Endothelial cell of umbilical vein (primary cell): ENCODE measurements at regions of chr1 and their contacts with region 1.

Region 1: DNA sequence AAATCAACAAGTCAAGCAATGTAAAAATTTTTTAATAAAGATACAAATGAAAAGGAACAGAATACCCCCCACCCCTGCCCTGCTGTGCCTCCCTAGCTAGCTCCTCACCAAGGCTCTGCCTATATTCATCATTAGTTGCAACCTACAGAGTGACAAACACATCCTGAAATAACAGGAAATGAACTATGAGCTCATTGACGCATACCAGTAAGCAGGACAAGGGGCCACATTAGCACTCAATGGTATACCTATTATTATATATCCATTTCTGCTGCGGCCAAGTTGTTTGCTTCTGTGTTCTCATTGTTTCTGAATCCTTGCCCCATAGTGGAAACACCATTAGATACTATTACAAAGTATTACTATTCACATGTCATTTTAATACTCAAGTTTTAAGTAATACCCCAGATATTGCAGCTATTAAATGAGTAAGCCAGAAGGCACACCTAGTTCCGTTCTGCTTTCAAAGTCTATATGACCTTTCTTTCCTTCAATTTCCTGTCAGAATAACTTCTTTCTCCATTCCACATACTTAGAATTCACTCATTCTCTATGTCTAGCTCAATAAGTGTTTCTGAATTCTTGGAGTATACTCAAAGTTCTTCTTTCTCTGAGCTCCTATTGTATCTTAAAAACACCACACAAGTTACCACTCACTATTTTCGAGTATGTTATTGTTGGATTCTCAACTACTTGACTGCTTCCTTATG is 1214.9 kb downstream of the PLA2G4A start:
- DNase-seq: peak; percentile 92
- H3K4me3 ChIP-seq: peak overlapping the region in 1 of 3 experiments; percentile 26
- H3K27ac ChIP-seq: peak overlapping the region; percentile 94
- H3K4me1 ChIP-seq: peaks cover 33% of the 10 kb centered on the region
- H3K27me3 ChIP-seq: no peaks in the 10 kb centered on the region
- CTCF ChIP-seq: no peak
- POLR2A ChIP-seq: no peak

Region 2: GRCh38 chr1:187848321-187848720 is 195.4 kb before region 1 on chr1:
- CTCF ChIA-PET with region 1: no interaction called
- POLR2A ChIA-PET with region 1: no interaction called
- dilution Hi-C with region 1: no loop called
- intact Hi-C with region 1: loop called (anchors 5 kb)
- DNase-seq: peak; percentile 87
- H3K4me3 ChIP-seq: no peak overlapping the region
- H3K27ac ChIP-seq: peak overlapping the region; percentile 21
- H3K4me1 ChIP-seq: peaks cover 6% of the 10 kb centered on the region
- H3K27me3 ChIP-seq: no peaks in the 10 kb centered on the region
- CTCF ChIP-seq: no peak
- POLR2A ChIP-seq: no peak

Region 3: GRCh38 chr1:188062456-188062855 is 18.8 kb after region 1 on chr1:
- CTCF ChIA-PET with region 1: interaction called, 3 read pairs
- POLR2A ChIA-PET with region 1: no interaction called
- dilution Hi-C with region 1: no loop called
- intact Hi-C with region 1: loop called (anchors 2 kb)
- DNase-seq: no peak
- H3K4me3 ChIP-seq: no peak overlapping the region
- H3K27ac ChIP-seq: no peak overlapping the region
- H3K4me1 ChIP-seq: no peaks in the 10 kb centered on the region
- H3K27me3 ChIP-seq: no peaks in the 10 kb centered on the region
- CTCF ChIP-seq: no peak
- POLR2A ChIP-seq: no peak

Region 4: GRCh38 chr1:188489713-188490112 is 446.0 kb after region 1 on chr1:
- CTCF ChIA-PET with region 1: no interaction called
- POLR2A ChIA-PET with region 1: no interaction called
- dilution Hi-C with region 1: no loop called
- intact Hi-C with region 1: no loop called
- DNase-seq: no peak
- H3K4me3 ChIP-seq: no peak overlapping the region
- H3K27ac ChIP-seq: no peak overlapping the region
- H3K4me1 ChIP-seq: peaks cover 5% of the 10 kb centered on the region
- H3K27me3 ChIP-seq: no peaks in the 10 kb centered on the region
- CTCF ChIP-seq: no peak
- POLR2A ChIP-seq: no peak

Region 5: DNA sequence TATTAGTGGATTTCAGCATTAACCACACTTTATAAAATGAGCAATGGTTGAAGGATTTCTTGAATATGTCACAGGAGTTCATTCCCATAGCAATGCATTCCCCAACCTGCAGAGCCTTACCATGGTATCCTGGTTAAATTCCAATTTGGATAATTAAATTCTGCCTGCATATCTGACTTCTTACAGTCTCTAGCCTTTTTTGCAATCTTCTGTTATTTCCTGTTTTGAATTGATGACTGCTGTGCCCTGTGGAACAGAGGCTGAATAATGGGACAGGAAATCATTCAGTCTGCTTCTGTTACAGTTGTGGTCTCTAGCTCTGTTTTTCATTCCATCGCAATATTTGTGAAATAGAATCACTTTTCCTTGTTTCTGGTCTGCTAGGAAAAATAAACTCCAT is 609.0 kb after region 1 on chr1:
- CTCF ChIA-PET with region 1: no interaction called
- POLR2A ChIA-PET with region 1: no interaction called
- dilution Hi-C with region 1: no loop called
- intact Hi-C with region 1: loop called (anchors 5 kb)
- DNase-seq: peak; percentile 90
- H3K4me3 ChIP-seq: no peak overlapping the region
- H3K27ac ChIP-seq: peak overlapping the region; percentile 55
- H3K4me1 ChIP-seq: peaks cover 18% of the 10 kb centered on the region
- H3K27me3 ChIP-seq: no peaks in the 10 kb centered on the region
- CTCF ChIP-seq: no peak
- POLR2A ChIP-seq: no peak